Activated CD8-positive, alpha-beta memory T cell treated with anti-CD3 and anti-CD28 coated beads, Interleukin-2, amount 10 ng/mL, durations not matched to agents 7 days and 5 days (primary cell): ENCODE measurements at regions of chr1 and their contacts with region 1.

Region 1: DNA sequence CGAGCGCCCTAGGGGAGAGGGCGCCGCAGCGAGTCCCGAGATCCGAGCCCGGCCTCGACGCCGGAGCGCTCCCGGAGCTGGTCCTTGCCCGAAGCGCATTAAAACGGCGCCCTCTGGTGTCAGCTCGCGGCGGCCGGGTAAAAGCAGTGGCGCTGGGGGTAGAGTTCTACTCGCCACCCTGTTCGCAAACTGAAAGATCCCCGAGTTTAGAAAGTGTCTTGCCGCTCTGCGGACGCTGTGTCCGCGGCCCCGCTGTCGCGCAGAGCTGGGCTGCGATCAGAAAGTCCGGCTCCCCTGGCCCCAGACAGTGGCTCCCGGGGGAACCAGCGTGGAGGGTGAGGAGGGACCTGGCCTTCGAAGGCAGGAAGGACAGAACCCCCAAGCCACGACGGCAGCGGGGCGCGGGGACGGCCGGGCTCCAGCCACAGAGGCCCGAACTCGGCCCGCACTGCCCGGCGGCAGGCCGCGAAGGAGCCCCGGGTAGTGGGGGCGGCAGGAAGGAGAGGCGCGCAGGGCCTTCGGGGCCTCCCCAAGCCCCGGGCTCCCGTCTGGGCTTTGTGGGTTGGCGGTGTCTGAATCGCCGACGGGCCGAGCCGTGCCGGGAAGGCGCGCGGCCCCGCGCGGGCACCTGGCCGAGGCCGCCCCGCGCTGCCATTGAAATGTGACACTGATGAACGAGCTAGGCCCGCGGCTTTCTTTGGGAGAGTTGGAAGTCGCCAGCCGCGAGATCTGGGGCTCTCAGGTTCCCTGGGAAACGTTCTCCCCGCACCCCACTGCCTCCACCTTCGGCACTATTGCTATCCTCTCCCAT is 39.1 kb upstream of the NFIA start:
- DNase-seq: peak; percentile 90
- ATAC-seq: peak; percentile 98
- H3K4me3 Mint-ChIP-seq: peak overlapping the region; percentile 69
- H3K27ac Mint-ChIP-seq: no peak overlapping the region
- H3K4me1 Mint-ChIP-seq: peaks cover 7% of the 10 kb centered on the region
- H3K27me3 Mint-ChIP-seq: peaks cover 36% of the 10 kb centered on the region

Region 2: DNA sequence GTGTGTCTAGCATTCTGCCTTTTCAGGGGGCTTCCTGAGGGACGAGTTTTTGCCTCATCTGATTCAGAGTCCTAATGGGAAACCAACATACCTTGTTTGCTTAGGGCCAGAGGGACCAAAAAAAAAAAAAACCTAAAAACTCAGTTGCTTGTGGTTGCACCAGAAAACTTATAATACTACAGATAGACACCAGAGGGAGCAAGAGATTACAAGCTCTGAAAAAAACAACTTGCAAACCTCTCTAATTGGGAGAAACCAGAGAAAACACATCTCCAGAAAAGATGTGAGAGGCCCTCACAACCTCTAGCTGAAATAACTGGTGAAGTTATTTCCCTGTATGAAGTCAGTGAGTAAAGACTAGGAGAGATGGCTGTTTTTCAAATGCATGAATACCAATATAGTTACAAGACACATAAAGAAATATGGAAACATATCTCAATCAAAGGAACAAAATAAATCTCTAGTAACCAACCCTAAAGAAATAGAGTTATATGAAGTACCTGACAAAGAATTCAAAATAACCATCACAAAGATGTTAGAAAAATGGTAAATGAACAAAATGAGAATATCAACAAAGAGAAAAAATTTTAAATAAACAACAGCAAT is 194.5 kb before region 1 on chr1:
- CTCF ChIA-PET with region 1: interaction called, 17 read pairs
- DNase-seq: no peak
- ATAC-seq: no peak
- H3K4me3 Mint-ChIP-seq: no peak overlapping the region
- H3K27ac Mint-ChIP-seq: no peak overlapping the region
- H3K4me1 Mint-ChIP-seq: no peaks in the 10 kb centered on the region
- H3K27me3 Mint-ChIP-seq: peaks cover 37% of the 10 kb centered on the region

Region 3: DNA sequence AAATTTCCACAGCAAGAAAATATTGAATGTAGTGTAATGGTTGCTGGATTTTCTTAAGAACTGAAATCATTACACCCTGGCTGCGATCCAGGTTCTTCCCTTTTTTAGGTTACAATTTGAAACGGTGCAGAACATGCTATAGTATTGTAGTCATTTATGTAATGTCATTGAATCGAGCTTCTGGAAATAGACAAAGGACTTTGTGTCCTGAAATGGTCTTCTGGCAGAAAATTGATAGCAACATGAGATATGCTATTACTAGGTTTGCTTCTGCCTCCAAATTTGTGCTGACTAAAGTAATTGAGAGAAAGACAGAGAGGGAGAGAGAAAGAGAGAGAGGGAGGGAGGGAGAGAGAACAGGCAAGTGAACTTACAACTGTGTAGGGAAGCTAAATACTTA is 107.1 kb before region 1 on chr1:
- CTCF ChIA-PET with region 1: no interaction called
- DNase-seq: no peak
- ATAC-seq: no peak
- H3K4me3 Mint-ChIP-seq: no peak overlapping the region
- H3K27ac Mint-ChIP-seq: no peak overlapping the region
- H3K4me1 Mint-ChIP-seq: no peaks in the 10 kb centered on the region
- H3K27me3 Mint-ChIP-seq: peaks cover 29% of the 10 kb centered on the region

Region 4: GRCh38 chr1:60978421-60979357 is 64.5 kb before region 1 on chr1:
- CTCF ChIA-PET with region 1: interaction called, 85 read pairs
- DNase-seq: peak; percentile 66
- ATAC-seq: peak; percentile 84
- H3K4me3 Mint-ChIP-seq: no peak overlapping the region
- H3K27ac Mint-ChIP-seq: no peak overlapping the region
- H3K4me1 Mint-ChIP-seq: peaks cover 3% of the 10 kb centered on the region
- H3K27me3 Mint-ChIP-seq: peaks cover 7% of the 10 kb centered on the region

Region 5: DNA sequence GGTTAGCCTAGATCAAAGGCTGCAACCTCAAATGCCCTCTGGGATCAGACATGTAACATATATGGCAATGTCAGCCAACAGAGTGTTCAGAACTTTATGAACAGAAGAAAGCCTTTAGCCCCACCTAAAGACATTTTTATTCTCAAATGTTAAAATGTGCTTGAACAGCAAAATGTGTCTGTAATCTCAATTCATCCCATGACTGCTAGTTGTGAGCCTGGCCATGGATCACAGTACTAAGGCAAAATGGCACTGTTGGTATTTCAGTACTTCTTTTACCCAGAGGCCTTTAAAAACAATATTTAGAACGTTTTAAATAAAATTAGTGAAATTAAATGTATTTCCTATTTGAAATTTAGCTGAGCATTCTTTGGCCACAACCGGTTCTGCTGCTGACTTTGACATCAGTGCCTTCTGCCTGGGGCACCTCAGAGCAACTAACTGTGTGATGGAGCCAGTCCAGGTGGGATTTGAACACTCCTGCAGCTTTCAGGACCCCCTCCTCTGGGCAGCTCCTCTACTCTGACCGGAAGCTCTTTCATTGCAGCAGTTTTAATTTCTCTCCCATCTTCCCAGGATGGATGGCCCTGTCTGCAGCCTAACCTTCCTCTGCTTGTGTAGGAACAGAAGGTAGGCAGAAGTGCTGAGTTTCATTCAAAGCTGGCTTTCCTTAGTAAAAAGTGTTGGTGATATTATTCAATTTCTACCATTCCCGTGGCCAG is 29.1 kb before region 1 on chr1:
- CTCF ChIA-PET with region 1: interaction called, 13 read pairs
- DNase-seq: no peak
- ATAC-seq: no peak
- H3K4me3 Mint-ChIP-seq: no peak overlapping the region
- H3K27ac Mint-ChIP-seq: no peak overlapping the region
- H3K4me1 Mint-ChIP-seq: peaks cover 13% of the 10 kb centered on the region
- H3K27me3 Mint-ChIP-seq: peaks cover 29% of the 10 kb centered on the region

Region 6: DNA sequence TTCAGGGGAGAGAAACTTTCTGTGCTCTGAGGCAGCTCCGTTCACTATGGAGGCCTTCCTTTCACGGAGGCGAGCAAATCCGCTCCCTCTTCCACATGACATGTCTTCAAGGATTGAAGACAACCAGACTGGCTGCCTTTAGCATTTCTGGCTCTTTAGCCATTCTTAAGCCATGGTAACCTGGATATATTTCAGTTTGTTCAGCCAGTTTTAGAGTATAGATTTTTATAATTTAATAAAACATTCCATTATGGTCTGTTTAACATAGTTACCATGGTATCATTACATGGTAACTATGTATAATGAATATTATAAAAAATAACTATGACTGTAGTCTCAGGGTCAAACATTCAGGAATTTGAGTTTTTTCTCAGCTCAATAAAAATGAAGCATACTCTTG is 15.1 kb before region 1 on chr1:
- CTCF ChIA-PET with region 1: interaction called, 12 read pairs
- DNase-seq: no peak
- ATAC-seq: no peak
- H3K4me3 Mint-ChIP-seq: no peak overlapping the region
- H3K27ac Mint-ChIP-seq: no peak overlapping the region
- H3K4me1 Mint-ChIP-seq: no peaks in the 10 kb centered on the region
- H3K27me3 Mint-ChIP-seq: no peaks in the 10 kb centered on the region

Region 7: DNA sequence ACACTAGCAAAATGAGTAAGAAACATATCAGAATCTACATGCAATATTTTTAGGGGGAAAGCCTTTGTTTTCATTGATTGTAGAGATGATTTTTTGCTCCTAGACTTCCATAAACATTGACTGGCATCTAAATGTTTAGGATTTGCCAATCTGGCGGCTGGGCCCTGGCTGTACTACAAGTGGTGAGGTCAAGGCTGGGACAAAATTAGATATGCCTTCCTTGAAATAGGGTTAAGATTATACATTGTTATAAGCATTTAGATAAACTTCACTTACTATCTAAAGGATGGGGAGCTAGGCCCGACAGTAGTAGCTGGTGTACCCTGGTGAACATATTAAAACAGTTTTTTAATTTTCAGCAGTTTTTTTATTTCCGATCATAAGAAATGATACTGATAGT is 44.4 kb after region 1 on chr1:
- CTCF ChIA-PET with region 1: no interaction called
- DNase-seq: no peak
- ATAC-seq: no peak
- H3K4me3 Mint-ChIP-seq: no peak overlapping the region
- H3K27ac Mint-ChIP-seq: no peak overlapping the region
- H3K4me1 Mint-ChIP-seq: peaks cover 15% of the 10 kb centered on the region
- H3K27me3 Mint-ChIP-seq: peaks cover 11% of the 10 kb centered on the region